Left colon (tissue), 2 donors: ENCODE measurements at regions of chr13 and their contacts with region 1.

Region 1: DNA sequence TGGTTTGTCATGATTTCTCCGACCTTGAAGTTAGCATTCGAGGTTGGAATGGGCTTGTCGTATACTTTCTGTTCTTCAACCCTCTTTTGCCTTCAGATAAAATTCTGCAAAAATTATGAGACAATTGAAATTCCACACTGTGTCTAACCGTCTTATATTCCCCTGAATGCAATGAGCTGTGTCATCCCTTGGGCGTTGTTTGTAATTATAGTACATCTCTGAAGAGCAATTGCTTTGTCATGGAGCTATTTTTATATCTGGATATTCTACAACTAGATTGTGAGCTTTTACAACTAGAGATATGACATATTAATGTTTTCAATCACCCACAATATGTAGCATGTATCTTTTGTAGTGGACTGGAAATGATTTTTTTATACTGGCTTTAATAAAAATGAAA is 631.8 kb upstream of the SLC10A2 start:
- DNase-seq: no peak
- ATAC-seq: no peak

Region 2: GRCh38 chr13:103656311-103656710 is 41.7 kb before region 1 on chr13:
- intact Hi-C with region 1: loop called in 1 of 2 experiments (anchors 2 kb)
- DNase-seq: no peak
- ATAC-seq: no peak